ENCODE measurements at regions of chr1 and their contacts with region 1.

Region 1: GRCh38 chr1:218273762-218274479 is 11.2 kb upstream of the RRP15 start:
- DNase-seq: no peak
- H3K4me3 Mint-ChIP-seq: no peak overlapping the region
- H3K27ac Mint-ChIP-seq: no peak overlapping the region
- H3K4me1 Mint-ChIP-seq: no peaks in the 10 kb centered on the region
- H3K27me3 Mint-ChIP-seq: peaks cover 66% of the 10 kb centered on the region
- CTCF ChIP-seq: no peak

Region 2: DNA sequence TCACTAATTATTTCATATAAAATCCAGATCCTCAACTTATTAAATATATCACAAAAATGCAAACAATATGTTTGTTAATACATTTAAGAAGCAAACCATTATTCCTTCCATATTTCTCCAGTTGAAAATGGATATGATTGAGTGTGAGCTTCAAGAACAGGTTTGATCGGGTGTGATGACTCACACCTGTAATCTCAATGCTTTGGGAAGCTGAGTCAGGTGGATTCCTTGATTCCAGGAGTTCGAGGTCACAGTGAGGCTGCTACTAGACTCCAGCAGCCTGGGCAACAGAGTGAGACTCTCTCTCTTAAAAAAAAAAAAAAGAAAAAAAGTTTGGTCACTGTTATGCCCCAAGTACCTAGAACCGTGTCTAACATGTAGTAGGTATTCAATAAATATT is 31.8 kb before region 1 on chr1:
- CTCF ChIA-PET with region 1: no interaction called
- POLR2A ChIA-PET with region 1: no interaction called
- intact Hi-C with region 1: no loop called
- DNase-seq: peak; percentile 38
- H3K4me3 Mint-ChIP-seq: no peak overlapping the region
- H3K27ac Mint-ChIP-seq: no peak overlapping the region
- H3K4me1 Mint-ChIP-seq: no peaks in the 10 kb centered on the region
- H3K27me3 Mint-ChIP-seq: peaks cover 77% of the 10 kb centered on the region
- CTCF ChIP-seq: no peak

Region 3: GRCh38 chr1:218259800-218260199 is 14.1 kb before region 1 on chr1:
- CTCF ChIA-PET with region 1: interaction called, 12 read pairs
- POLR2A ChIA-PET with region 1: interaction called, 3 read pairs
- intact Hi-C with region 1: no loop called
- DNase-seq: peak; percentile 68
- H3K4me3 Mint-ChIP-seq: no peak overlapping the region
- H3K27ac Mint-ChIP-seq: no peak overlapping the region
- H3K4me1 Mint-ChIP-seq: no peaks in the 10 kb centered on the region
- H3K27me3 Mint-ChIP-seq: peaks cover 84% of the 10 kb centered on the region
- CTCF ChIP-seq: peak; percentile 68

Region 4: GRCh38 chr1:218284934-218285635 is 11.2 kb after region 1 on chr1 and contains the start of gene RRP15:
- CTCF ChIA-PET with region 1: interaction called, 5 read pairs
- POLR2A ChIA-PET with region 1: interaction called, 15 read pairs
- intact Hi-C with region 1: no loop called
- DNase-seq: peak; percentile 97
- H3K4me3 Mint-ChIP-seq: peak within 1 kb of the TSS; percentile 84
- H3K27ac Mint-ChIP-seq: peak within 1 kb of the TSS; percentile 91
- H3K4me1 Mint-ChIP-seq: peaks cover 18% of the 10 kb centered on the region
- H3K27me3 Mint-ChIP-seq: peaks cover 6% of the 10 kb centered on the region
- CTCF ChIP-seq: no peak
- total RNA-seq, gene RRP15: 65.8 and 83.1 TPM in 2 replicates

Measured in MCF 10A (cell line).